ENCODE measurements at regions of chr4 and their contacts with region 1.

Region 1: DNA sequence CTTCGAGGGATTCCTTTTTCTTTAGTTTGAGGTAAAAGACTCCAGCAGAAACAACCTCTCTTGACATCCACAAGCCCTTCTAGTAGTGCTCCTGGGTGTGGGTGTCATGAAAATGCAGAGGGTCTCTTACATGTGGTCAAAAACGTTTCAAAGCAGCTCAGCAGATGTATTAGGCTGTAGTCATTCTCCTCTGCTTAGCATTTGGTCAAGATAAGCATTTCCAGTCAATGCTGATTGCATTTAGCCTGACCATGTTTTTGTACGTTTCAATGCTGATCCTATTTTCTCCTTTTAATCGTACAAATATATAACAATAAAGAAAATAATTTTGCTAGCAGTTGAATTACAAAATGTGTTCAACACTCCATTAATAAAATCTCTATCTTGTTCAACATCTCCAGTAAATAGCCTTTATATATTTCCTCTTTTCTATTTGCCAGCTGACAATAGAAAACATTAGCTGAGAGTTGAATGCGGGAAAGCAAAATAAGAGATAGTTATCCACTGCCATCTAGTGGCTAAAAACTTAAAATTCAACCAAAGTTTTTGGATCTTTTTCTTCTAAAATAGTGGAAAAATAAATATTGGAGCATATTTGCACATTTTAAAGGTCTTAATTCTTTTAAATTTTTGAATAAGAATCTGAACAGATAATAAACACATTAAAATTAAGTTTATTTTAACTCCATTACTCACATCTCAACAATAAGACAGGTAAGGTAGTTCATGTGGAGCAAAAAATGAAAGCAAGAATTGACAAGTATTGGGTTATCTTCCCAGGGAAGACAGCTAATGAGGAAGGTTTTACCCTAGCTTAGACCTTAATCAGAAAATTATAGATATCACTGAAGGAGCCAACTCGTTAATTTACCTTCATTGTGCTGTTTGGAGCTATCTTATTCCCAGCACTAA is 15.2 kb upstream of the PACRGL start:
- DNase-seq: no peak
- H3K4me3 ChIP-seq: no peak overlapping the region
- H3K4me3 Mint-ChIP-seq: no peak overlapping the region
- H3K27ac Mint-ChIP-seq: no peak overlapping the region
- H3K4me1 ChIP-seq: no peaks in the 10 kb centered on the region
- H3K4me1 Mint-ChIP-seq: peaks cover 7% of the 10 kb centered on the region
- H3K27me3 ChIP-seq: no peaks in the 10 kb centered on the region
- H3K27me3 Mint-ChIP-seq: peaks cover 7% of the 10 kb centered on the region
- CTCF ChIP-seq: peak; percentile 47

Region 2: DNA sequence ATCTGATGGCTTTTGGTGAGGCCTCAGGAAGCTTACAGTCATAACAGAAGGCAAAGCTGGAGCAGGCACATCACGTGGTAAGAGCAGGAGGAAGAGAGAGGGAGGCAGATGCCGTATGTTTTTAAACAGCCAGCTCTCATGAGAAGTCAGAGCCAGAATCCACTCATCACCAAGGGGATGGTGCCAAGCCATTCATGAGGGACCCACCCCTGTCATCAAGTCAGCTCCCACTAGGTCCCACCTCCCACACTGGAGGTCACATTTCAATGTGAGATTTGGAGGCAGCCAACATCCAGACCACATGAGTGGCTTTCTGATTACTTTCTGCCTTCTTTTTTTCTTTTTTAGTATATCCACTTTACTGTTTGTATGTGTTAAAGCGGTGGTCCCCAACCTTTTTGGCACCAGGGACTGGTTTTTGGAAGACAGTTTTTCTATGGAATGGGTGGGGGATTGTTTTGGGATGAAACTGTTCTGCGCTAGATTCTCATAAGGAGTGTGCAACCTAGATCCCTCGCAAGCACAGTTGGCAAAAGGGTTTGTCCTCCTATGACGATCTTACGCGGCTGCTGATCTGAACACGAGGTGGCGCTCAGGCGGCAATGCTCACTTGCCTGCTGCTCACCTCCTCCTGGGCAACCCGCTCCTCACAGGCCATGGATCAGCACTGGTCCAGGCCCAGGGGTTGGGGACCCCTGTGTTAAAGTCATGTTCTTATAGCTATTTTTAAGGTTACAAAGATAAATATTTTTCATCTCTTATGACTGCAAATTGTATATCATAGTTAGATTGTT is 371.7 kb before region 1 on chr4:
- CTCF ChIA-PET with region 1: no interaction called
- POLR2A ChIA-PET with region 1: no interaction called
- intact Hi-C with region 1: loop called (anchors 10 kb)
- DNase-seq: peak; percentile 42 to 50
- H3K4me3 ChIP-seq: no peak overlapping the region
- H3K4me3 Mint-ChIP-seq: no peak overlapping the region
- H3K27ac Mint-ChIP-seq: no peak overlapping the region
- H3K4me1 ChIP-seq: no peaks in the 10 kb centered on the region
- H3K4me1 Mint-ChIP-seq: no peaks in the 10 kb centered on the region
- H3K27me3 ChIP-seq: no peaks in the 10 kb centered on the region
- H3K27me3 Mint-ChIP-seq: peaks cover 3% of the 10 kb centered on the region
- CTCF ChIP-seq: peak; percentile 12 to 27

Region 3: GRCh38 chr4:20422398-20422797 is 262.7 kb before region 1 on chr4:
- CTCF ChIA-PET with region 1: interaction called, 4 read pairs
- POLR2A ChIA-PET with region 1: no interaction called
- intact Hi-C with region 1: loop called (anchors 1 kb)
- DNase-seq: peak; percentile 55 to 69
- H3K4me3 ChIP-seq: no peak overlapping the region
- H3K4me3 Mint-ChIP-seq: no peak overlapping the region
- H3K27ac Mint-ChIP-seq: no peak overlapping the region
- H3K4me1 ChIP-seq: no peaks in the 10 kb centered on the region
- H3K4me1 Mint-ChIP-seq: no peaks in the 10 kb centered on the region
- H3K27me3 ChIP-seq: no peaks in the 10 kb centered on the region
- H3K27me3 Mint-ChIP-seq: peaks cover 12% of the 10 kb centered on the region
- CTCF ChIP-seq: peak; percentile 62 to 65

Region 4: DNA sequence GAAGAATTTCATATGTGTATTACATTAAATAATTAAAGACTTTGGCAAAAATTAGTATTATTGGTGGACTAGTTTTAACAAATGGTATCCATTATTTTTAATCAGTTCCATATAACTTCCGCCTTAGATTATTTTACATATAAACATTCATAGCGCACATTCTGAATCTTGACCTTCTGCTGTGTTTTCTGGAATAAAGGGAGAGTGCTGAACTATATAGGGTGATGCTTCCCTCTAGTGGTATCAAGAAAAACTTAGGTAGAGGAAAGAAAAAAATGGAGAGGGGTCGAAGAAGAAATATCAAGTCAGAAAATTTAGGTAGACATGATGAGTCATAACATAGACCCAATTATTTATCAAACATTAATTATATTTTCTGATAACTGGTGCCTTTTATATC is 140.5 kb before region 1 on chr4:
- CTCF ChIA-PET with region 1: no interaction called
- POLR2A ChIA-PET with region 1: no interaction called
- intact Hi-C with region 1: loop called (anchors 1 kb)
- DNase-seq: no peak
- H3K4me3 ChIP-seq: no peak overlapping the region
- H3K4me3 Mint-ChIP-seq: no peak overlapping the region
- H3K27ac Mint-ChIP-seq: no peak overlapping the region
- H3K4me1 ChIP-seq: no peaks in the 10 kb centered on the region
- H3K4me1 Mint-ChIP-seq: no peaks in the 10 kb centered on the region
- H3K27me3 ChIP-seq: no peaks in the 10 kb centered on the region
- H3K27me3 Mint-ChIP-seq: peaks cover 3% of the 10 kb centered on the region
- CTCF ChIP-seq: peak; percentile 46

Measured in Caco-2 (cell line).